ENCODE measurements at regions of chr7 and their contacts with region 1.

Region 1: DNA sequence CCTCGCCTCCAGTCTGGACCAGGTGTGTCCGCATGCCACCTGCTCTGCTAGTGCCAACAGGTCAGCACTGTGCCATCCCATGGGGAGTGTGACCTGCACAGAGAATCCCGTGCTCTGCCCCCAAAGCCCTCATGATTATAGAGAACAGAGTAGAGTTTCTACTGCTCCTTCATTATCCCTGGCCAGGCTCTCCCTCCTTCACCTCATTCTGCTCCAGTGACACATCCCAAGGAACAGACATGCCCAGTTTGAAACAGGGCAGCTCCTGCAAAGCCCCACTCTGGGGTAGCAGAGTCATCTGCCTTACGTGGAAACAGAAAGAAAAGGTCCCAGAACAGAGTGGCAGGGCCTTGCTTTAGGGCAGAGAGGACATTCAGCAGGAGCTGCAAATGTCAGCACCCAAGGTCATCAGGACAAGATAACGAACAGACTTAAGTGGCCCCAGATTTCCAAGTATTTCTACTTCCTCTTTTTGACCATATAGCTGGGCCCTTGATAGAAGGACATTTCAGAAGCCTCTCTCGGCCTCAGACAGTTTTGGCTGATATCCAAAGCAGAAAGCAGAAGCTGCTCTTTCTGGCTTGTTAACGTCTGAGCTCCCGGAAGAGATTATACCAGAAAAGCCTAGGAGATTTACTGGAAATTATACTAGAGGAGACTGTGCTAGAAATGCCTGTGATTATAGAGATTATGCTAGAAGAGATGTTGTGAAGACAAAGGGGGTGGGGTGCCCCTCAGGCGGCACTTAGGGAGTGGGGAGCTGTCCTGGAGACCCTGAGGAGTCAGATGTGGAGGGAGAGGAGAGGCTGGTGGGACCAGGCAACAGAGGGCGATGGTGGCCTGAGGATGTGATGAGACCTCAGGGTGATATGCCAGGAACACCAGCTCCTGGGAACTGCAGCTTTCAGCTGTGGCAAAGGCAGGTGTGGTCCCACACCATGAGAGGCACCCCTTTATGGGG is 12.6 kb downstream of the TMEM176B start:
- DNase-seq: peak in 3 of 42 donors; percentile 13 to 31 (median 28)

Region 2: DNA sequence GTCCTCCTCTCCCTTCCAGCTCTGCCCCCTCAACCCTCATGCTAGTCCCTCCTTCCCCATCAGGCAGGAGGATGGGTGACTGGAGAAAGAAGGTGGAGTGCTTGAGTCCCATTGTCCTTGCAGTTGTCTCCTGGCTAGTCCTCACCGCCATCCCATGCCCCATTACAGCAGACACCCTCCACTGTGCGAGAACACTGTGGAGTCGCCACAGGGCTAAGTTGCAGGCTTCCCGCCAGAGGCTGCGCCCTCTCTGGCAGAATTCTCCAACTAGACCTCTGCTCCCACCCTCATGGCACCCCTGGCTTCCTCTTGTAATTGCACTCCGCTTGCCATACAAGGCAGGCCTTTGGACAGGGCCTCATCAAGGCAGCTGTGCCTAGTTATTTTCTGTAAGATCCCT is 99.0 kb before region 1 on chr7:
- intact Hi-C with region 1: no loop called
- DNase-seq: no peak

Region 3: GRCh38 chr7:150876817-150877526 is 89.4 kb after region 1 on chr7:
- intact Hi-C with region 1: loop called (anchors 10 kb)
- DNase-seq: peak in 36 of 42 donors; percentile 23 to 81 (median 54)

Measured in head of caudate nucleus (tissue), 42 donors.